MCF 10A (cell line): ENCODE measurements at regions of chr17 and their contacts with region 1.

Region 1: GRCh38 chr17:39244600-39245570 is 19.1 kb upstream of the STAC2 start:
- DNase-seq: peak; percentile 86
- H3K4me3 Mint-ChIP-seq: no peak overlapping the region
- H3K27ac Mint-ChIP-seq: no peak overlapping the region
- H3K4me1 Mint-ChIP-seq: no peaks in the 10 kb centered on the region
- H3K27me3 Mint-ChIP-seq: no peaks in the 10 kb centered on the region
- CTCF ChIP-seq: peak; percentile 92

Region 2: GRCh38 chr17:38824899-38825761 is 419.8 kb before region 1 on chr17 and contains the start of gene CWC25:
- CTCF ChIA-PET with region 1: no interaction called
- POLR2A ChIA-PET with region 1: no interaction called
- intact Hi-C with region 1: no loop called
- DNase-seq: peak; percentile 92
- H3K4me3 Mint-ChIP-seq: peak within 1 kb of the TSS; percentile 98
- H3K27ac Mint-ChIP-seq: peak within 1 kb of the TSS; percentile 100
- H3K4me1 Mint-ChIP-seq: no peaks in the 10 kb centered on the region
- H3K27me3 Mint-ChIP-seq: no peaks in the 10 kb centered on the region
- CTCF ChIP-seq: no peak
- total RNA-seq, gene CWC25: 21.9 and 23.4 TPM in 2 replicates

Region 3: DNA sequence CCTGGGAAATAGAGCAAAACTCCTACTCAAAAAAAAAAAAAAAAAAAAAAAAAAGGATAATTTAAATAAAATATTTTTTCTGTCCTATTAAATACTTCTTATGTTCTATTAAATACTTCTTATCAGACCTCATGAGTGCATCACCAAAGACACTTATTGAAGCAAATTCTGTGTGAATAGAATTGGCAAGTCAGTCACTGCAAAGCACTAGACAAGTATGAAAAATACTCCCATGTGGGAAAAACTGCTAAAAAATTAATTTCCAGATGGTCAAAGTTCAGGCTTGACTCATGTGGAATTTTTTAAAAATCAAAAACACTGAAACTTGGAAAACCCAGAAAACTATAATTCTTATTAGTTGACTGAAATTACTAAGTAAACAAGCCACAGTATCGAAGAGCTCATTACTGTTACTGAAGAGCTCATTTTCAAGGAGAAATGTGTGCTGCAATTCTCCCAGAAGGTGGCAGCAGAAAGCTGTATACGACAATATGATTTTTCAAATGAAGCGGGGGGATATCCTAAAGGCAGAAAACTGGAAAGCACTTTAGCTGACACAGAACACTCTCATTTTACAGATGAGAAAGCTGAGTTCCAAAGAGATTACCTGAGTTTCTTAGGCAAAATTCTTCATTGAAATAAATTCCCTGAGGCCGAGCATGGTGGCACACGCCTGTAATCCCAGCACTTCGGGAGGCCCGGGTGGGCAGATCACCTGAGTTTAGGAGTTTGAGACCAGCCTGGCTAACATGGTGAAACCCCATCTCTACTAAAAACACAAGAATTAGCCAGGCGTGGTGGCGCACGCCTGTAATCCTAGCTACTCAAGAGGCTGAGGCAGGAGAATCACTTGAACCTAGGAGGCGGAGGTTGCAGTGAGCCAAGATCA is 261.8 kb before region 1 on chr17:
- CTCF ChIA-PET with region 1: interaction called, 12 read pairs
- POLR2A ChIA-PET with region 1: no interaction called
- intact Hi-C with region 1: loop called (anchors 5 kb)
- DNase-seq: peak; percentile 68
- H3K4me3 Mint-ChIP-seq: no peak overlapping the region
- H3K27ac Mint-ChIP-seq: no peak overlapping the region
- H3K4me1 Mint-ChIP-seq: no peaks in the 10 kb centered on the region
- H3K27me3 Mint-ChIP-seq: no peaks in the 10 kb centered on the region
- CTCF ChIP-seq: peak; percentile 92

Region 4: GRCh38 chr17:39164675-39165143 is 80.2 kb before region 1 on chr17:
- CTCF ChIA-PET with region 1: interaction called, 4 read pairs
- POLR2A ChIA-PET with region 1: no interaction called
- intact Hi-C with region 1: loop called (anchors 1 kb)
- DNase-seq: peak; percentile 80
- H3K4me3 Mint-ChIP-seq: no peak overlapping the region
- H3K27ac Mint-ChIP-seq: no peak overlapping the region
- H3K4me1 Mint-ChIP-seq: peaks cover 18% of the 10 kb centered on the region
- H3K27me3 Mint-ChIP-seq: peaks cover 22% of the 10 kb centered on the region
- CTCF ChIP-seq: peak; percentile 68

Region 5: GRCh38 chr17:39199820-39200069 is 45.1 kb before region 1 on chr17:
- CTCF ChIA-PET with region 1: interaction called, 485 read pairs
- POLR2A ChIA-PET with region 1: interaction called, 8 read pairs
- intact Hi-C with region 1: no loop called
- DNase-seq: peak; percentile 95
- H3K4me3 Mint-ChIP-seq: peak overlapping the region; percentile 90
- H3K27ac Mint-ChIP-seq: peak overlapping the region; percentile 100
- H3K4me1 Mint-ChIP-seq: peaks cover 22% of the 10 kb centered on the region
- H3K27me3 Mint-ChIP-seq: no peaks in the 10 kb centered on the region
- CTCF ChIP-seq: no peak

Region 6: GRCh38 chr17:39209317-39210092 is 35.4 kb before region 1 on chr17:
- CTCF ChIA-PET with region 1: interaction called, 485 read pairs
- POLR2A ChIA-PET with region 1: interaction called, 75 read pairs
- intact Hi-C with region 1: loop called (anchors 1 kb)
- DNase-seq: peak; percentile 94
- H3K4me3 Mint-ChIP-seq: peak overlapping the region; percentile 54
- H3K27ac Mint-ChIP-seq: peak overlapping the region; percentile 83
- H3K4me1 Mint-ChIP-seq: peaks cover 56% of the 10 kb centered on the region
- H3K27me3 Mint-ChIP-seq: no peaks in the 10 kb centered on the region
- CTCF ChIP-seq: no peak

Region 7: DNA sequence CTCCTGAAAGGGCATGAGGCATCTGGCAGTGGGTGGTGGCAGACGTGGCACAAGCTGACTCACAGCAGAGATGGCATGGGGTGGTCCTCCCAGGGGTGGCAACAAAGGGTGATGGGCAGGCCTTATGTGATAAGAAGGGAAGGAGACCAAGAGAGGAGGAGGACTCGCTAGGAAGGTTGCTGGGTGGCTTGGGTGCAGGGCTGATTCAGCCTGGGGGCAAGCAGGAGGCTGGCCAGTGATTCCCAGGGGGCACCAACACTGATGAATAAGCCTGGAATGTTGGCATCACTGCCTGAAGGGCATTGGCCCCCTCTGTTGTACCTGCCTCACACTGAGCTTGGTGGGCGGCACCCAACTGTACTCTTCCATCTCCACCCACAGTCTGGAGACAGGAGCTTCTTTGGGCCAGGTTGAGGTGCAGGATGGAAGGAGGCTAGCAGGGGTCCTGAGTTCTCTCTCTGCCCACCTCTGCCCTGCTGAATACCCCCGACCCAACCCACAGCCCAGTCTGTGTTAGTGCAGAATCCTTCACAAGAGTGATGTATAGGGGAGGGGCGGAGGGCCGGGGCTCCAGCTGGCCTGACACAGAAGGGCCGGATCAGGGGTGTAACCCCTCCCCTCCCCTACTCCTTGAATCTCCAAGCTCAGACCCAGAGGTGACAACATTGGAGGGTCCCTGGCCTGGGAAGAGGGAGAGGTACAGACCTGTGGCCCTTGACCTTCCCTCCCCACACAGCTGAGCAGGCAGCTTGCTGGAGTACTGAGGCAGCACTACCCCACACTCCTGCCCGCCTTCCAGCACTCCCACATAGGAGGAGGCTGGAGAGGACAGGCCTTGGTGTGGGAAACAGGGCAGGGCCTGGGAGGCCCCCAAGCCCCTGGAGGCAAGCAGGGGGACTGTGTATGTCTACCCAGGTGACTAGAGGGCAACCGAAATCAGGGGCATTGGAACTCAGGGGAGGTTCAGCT is 21.7 kb before region 1 on chr17:
- CTCF ChIA-PET with region 1: interaction called, 10 read pairs
- POLR2A ChIA-PET with region 1: no interaction called
- intact Hi-C with region 1: no loop called
- DNase-seq: peak; percentile 69
- H3K4me3 Mint-ChIP-seq: peak overlapping the region; percentile 17
- H3K27ac Mint-ChIP-seq: peak overlapping the region; percentile 25
- H3K4me1 Mint-ChIP-seq: peaks cover 25% of the 10 kb centered on the region
- H3K27me3 Mint-ChIP-seq: peaks cover 30% of the 10 kb centered on the region
- CTCF ChIP-seq: no peak